Naive thymus-derived CD4-positive, alpha-beta T cell (primary cell): ENCODE measurements at regions of chr18 and their contacts with region 1.

Region 1: DNA sequence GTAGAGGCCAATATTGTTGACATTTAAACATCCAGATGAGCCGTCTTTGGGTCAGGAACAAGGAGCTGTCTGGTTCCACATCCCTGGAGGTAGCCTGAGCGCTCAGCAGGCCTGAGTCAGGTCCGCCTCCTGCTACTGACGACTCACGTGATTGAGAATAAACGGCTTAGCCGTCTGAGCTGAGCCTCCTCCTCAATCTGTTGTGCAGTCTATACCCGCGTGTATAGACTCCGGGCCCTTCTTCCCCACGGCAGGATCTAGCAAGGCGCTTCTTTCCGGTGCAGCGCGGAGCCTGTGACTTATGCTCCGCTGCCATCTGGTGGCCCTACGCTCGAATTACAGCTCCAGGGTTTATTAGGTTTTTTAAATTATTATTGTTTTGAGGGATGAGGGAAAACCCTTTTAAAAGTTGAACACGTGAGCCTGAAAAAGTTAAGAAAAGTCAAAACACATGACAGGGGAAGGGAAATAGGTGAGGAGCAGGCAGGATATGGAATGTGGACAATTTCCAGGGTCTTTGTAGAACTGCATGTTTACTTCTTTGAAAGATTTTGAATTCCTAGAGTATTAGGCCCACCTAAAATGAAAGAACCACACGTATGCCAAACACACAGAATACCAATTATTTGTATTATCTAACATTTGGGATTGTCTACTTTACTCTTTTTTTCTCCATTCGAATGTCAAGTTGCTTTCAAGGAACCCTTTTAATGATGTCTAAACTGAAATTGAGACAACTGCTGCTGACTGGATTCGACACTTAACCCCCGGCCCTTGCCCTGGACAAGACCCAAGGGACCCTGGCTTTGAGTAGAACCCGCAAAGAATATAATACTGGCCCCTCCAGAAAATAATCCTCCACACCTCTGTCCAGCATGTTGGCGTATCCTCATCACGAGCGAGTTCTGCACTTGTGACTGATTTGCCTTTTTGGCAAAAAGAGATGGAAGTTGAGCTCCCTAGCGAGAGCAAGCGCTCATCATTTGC is 112.4 kb upstream of the ZNF236 start:
- DNase-seq: peak; percentile 23 to 66 (median 54)
- ATAC-seq: peak; percentile 93
- H3K4me3 ChIP-seq: no peak overlapping the region
- H3K4me3 Mint-ChIP-seq: peak overlapping the region in 2 of 10 donors; percentile 10 to 36
- H3K27ac ChIP-seq: no peak overlapping the region
- H3K27ac Mint-ChIP-seq: peak overlapping the region in 1 of 9 donors; percentile 25
- H3K4me1 ChIP-seq: no peaks in the 10 kb centered on the region
- H3K4me1 Mint-ChIP-seq: peaks cover 3 to 15% (median 6%) of the 10 kb centered on the region in 7 donors
- H3K27me3 ChIP-seq: no peaks in the 10 kb centered on the region
- H3K27me3 Mint-ChIP-seq: peaks cover 0 to 22% (median 0%) of the 10 kb centered on the region in 5 donors

Region 2: DNA sequence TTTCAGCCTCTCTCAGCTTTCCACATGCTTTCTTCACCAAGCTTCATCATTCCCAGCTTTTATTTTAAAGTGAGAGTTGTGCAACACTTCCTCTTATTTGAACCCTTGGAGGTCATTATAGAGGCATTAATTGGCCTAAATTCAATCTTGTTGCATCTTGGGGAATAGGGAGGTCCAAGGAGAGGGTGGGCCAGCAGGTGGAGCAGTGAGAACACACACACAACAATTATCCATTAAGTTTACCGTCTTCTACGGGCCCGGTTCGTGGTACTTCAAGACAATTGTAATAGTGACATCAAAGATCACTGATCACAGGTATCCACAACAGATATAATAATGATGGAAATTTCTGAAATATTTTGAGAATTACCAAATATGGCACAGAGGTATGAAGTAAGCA is 825.2 kb before region 1 on chr18:
- CTCF ChIA-PET with region 1: no interaction called
- POLR2A ChIA-PET with region 1: no interaction called
- intact Hi-C with region 1: loop called in 1 of 2 experiments (anchors 10 kb)
- DNase-seq: no peak
- ATAC-seq: no peak
- H3K4me3 ChIP-seq: no peak overlapping the region
- H3K4me3 Mint-ChIP-seq: peak overlapping the region in 1 of 10 donors; percentile 22
- H3K27ac ChIP-seq: no peak overlapping the region
- H3K27ac Mint-ChIP-seq: no peak overlapping the region
- H3K4me1 ChIP-seq: no peaks in the 10 kb centered on the region
- H3K4me1 Mint-ChIP-seq: no peaks in the 10 kb centered on the region
- H3K27me3 ChIP-seq: no peaks in the 10 kb centered on the region
- H3K27me3 Mint-ChIP-seq: peaks cover 0 to 23% (median 4%) of the 10 kb centered on the region in 5 donors

Region 3: GRCh38 chr18:76398896-76399612 is 310.9 kb before region 1 on chr18:
- CTCF ChIA-PET with region 1: interaction called, 101 read pairs
- POLR2A ChIA-PET with region 1: interaction called, 3 read pairs
- intact Hi-C with region 1: loop called (anchors 1 kb)
- DNase-seq: peak; percentile 47 to 78 (median 71)
- ATAC-seq: peak; percentile 93
- H3K4me3 ChIP-seq: no peak overlapping the region
- H3K4me3 Mint-ChIP-seq: peak overlapping the region in 1 of 10 donors; percentile 12
- H3K27ac ChIP-seq: no peak overlapping the region
- H3K27ac Mint-ChIP-seq: peak overlapping the region in 2 of 9 donors; percentile 41 to 73
- H3K4me1 ChIP-seq: no peaks in the 10 kb centered on the region
- H3K4me1 Mint-ChIP-seq: peaks cover 5 to 38% (median 27%) of the 10 kb centered on the region in 7 donors
- H3K27me3 ChIP-seq: no peaks in the 10 kb centered on the region
- H3K27me3 Mint-ChIP-seq: peaks cover 0 to 17% (median 0%) of the 10 kb centered on the region in 5 donors

Region 4: DNA sequence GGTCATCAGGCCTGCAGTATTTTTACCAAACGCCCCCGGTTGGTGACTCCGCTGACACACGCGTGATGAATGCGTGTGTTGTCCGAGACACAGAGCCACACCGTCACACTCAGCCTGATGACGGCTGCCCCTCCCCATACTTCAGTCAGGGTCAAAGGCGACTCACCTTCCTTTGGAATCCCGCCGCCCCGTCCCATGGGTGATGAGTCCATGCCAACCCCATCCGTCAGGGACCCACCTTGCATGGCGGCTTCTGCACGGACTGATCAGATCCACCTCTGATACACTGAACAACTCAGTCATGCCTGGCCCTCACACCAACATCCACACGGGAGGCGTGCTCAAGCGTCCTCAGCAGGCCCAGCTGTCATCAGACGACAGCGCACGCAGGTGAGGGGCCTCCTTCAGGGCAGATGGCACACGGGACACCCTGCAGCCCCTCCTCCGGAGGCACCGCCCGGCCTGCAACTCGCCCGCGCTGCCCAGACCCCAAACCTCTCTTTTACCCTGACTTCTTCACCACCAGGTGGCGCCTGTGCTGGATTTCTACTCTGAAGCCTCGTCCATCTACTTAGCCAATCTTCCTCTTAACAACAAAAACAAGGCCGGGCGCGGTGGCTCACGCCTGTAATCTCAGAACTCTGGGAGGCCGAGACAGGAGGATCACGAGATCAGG is 304.1 kb before region 1 on chr18:
- CTCF ChIA-PET with region 1: interaction called, 101 read pairs
- POLR2A ChIA-PET with region 1: no interaction called
- intact Hi-C with region 1: loop called in 1 of 2 experiments (anchors 1 kb)
- DNase-seq: peak in 7 of 9 donors; percentile 14 to 54 (median 36)
- ATAC-seq: peak; percentile 51
- H3K4me3 ChIP-seq: no peak overlapping the region
- H3K4me3 Mint-ChIP-seq: no peak overlapping the region
- H3K27ac ChIP-seq: no peak overlapping the region
- H3K27ac Mint-ChIP-seq: peak overlapping the region in 1 of 9 donors; percentile 48
- H3K4me1 ChIP-seq: peaks cover 0 to 2% of the 10 kb centered on the region in 2 donors
- H3K4me1 Mint-ChIP-seq: peaks cover 6 to 62% (median 43%) of the 10 kb centered on the region in 7 donors
- H3K27me3 ChIP-seq: no peaks in the 10 kb centered on the region
- H3K27me3 Mint-ChIP-seq: peaks cover 0 to 5% (median 0%) of the 10 kb centered on the region in 5 donors

Region 5: DNA sequence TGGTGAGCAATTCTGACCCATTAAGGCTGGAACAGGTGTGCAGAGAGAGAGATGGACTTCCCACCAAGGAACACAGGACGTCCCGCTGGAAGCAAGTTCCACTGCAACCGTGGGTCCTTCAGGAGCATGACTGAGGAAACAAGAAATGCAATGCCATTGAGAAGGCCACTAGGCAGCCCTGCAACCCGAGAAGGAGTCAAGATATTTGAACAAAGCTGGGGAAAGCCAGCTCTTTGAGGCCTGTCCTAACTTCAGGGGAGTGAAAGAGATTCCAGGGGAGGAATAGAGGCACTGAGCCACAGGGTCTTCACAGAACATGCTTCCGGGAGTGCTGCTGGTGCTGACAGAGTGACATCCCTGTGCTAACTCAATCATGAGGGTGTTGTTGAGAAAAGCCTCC is 41.4 kb before region 1 on chr18:
- CTCF ChIA-PET with region 1: no interaction called
- POLR2A ChIA-PET with region 1: no interaction called
- intact Hi-C with region 1: loop called in 1 of 2 experiments (anchors 5 kb)
- DNase-seq: no peak
- ATAC-seq: no peak
- H3K4me3 ChIP-seq: no peak overlapping the region
- H3K4me3 Mint-ChIP-seq: no peak overlapping the region
- H3K27ac ChIP-seq: no peak overlapping the region
- H3K27ac Mint-ChIP-seq: peak overlapping the region in 1 of 9 donors; percentile 6
- H3K4me1 ChIP-seq: no peaks in the 10 kb centered on the region
- H3K4me1 Mint-ChIP-seq: no peaks in the 10 kb centered on the region
- H3K27me3 ChIP-seq: no peaks in the 10 kb centered on the region
- H3K27me3 Mint-ChIP-seq: peaks cover 5 to 20% (median 7%) of the 10 kb centered on the region in 5 donors

Region 6: GRCh38 chr18:76756531-76757253 is 46.7 kb after region 1 on chr18:
- CTCF ChIA-PET with region 1: no interaction called
- POLR2A ChIA-PET with region 1: no interaction called
- intact Hi-C with region 1: loop called in 1 of 2 experiments (anchors 5 kb)
- DNase-seq: no peak
- ATAC-seq: no peak
- H3K4me3 ChIP-seq: no peak overlapping the region
- H3K4me3 Mint-ChIP-seq: no peak overlapping the region
- H3K27ac ChIP-seq: no peak overlapping the region
- H3K27ac Mint-ChIP-seq: no peak overlapping the region
- H3K4me1 ChIP-seq: peaks cover 0 to 4% of the 10 kb centered on the region in 2 donors
- H3K4me1 Mint-ChIP-seq: peaks cover 3 to 8% (median 5%) of the 10 kb centered on the region in 7 donors
- H3K27me3 ChIP-seq: no peaks in the 10 kb centered on the region
- H3K27me3 Mint-ChIP-seq: peaks cover 0 to 17% (median 0%) of the 10 kb centered on the region in 5 donors

Region 7: GRCh38 chr18:76922107-76922506 is 212.2 kb after region 1 on chr18:
- CTCF ChIA-PET with region 1: no interaction called
- POLR2A ChIA-PET with region 1: no interaction called
- intact Hi-C with region 1: no loop called
- DNase-seq: peak in 8 of 9 donors; percentile 40 to 72 (median 62)
- ATAC-seq: peak; percentile 98
- H3K4me3 ChIP-seq: no peak overlapping the region
- H3K4me3 Mint-ChIP-seq: peak overlapping the region in 1 of 10 donors; percentile 50
- H3K27ac ChIP-seq: no peak overlapping the region
- H3K27ac Mint-ChIP-seq: peak overlapping the region in 7 of 9 donors; percentile 1 to 78 (median 49)
- H3K4me1 ChIP-seq: no peaks in the 10 kb centered on the region
- H3K4me1 Mint-ChIP-seq: peaks cover 14 to 21% (median 18%) of the 10 kb centered on the region in 7 donors
- H3K27me3 ChIP-seq: no peaks in the 10 kb centered on the region
- H3K27me3 Mint-ChIP-seq: no peaks in the 10 kb centered on the region